Naive thymus-derived CD8-positive, alpha-beta T cell (primary cell): ENCODE measurements at regions of chr12 and their contacts with region 1.

Region 1: DNA sequence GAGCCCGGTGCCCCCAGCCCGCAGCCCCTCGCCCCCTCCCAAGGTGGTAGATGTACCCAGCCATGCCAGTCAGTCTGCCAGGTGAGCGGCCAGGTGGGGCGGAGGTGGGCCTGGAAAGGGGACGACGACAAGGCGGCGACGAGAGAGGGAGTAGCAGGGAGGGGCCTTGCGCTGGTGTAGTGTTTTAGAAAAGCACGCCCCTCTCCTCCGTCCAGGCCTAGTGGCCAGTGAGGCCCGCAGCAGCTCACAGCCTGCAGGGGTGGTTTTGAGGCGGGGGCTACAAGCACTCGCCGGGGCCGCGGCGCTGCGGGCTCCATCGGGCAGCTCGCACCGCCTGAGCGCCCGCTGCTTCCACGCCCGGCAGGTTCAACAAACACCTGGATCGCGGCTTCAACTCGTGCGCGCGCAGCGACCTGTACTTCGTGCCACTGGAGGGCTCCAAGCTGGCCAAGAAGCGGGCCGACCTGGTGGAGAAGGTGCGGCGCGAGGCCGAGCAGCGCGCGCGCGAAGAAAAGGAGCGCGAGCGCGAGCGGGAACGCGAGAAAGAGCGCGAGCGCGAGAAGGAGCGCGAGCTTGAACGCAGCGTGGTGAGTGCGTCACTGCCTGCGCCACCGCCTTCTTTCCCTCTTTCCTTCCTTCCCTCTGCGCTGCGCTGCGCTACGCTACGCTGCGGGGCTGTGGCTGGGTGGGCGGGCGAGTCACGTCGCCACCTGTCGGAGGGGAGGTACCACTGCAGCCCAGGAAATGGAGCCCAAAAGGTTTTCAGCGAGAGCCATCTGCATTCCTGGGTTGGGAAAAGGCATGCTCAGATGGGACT is 5.9 kb upstream of the RNU7-1 start:
- DNase-seq: peak; percentile 87 to 96 (median 92)
- ATAC-seq: peak; percentile 85 to 93
- H3K4me3 Mint-ChIP-seq: peak overlapping the region; percentile 72 to 91 (median 86)
- H3K27ac Mint-ChIP-seq: peak overlapping the region; percentile 89 to 98 (median 98)
- H3K4me1 Mint-ChIP-seq: peaks cover 29 to 53% (median 48%) of the 10 kb centered on the region in 4 donors
- H3K27me3 Mint-ChIP-seq: no peaks in the 10 kb centered on the region

Region 2: DNA sequence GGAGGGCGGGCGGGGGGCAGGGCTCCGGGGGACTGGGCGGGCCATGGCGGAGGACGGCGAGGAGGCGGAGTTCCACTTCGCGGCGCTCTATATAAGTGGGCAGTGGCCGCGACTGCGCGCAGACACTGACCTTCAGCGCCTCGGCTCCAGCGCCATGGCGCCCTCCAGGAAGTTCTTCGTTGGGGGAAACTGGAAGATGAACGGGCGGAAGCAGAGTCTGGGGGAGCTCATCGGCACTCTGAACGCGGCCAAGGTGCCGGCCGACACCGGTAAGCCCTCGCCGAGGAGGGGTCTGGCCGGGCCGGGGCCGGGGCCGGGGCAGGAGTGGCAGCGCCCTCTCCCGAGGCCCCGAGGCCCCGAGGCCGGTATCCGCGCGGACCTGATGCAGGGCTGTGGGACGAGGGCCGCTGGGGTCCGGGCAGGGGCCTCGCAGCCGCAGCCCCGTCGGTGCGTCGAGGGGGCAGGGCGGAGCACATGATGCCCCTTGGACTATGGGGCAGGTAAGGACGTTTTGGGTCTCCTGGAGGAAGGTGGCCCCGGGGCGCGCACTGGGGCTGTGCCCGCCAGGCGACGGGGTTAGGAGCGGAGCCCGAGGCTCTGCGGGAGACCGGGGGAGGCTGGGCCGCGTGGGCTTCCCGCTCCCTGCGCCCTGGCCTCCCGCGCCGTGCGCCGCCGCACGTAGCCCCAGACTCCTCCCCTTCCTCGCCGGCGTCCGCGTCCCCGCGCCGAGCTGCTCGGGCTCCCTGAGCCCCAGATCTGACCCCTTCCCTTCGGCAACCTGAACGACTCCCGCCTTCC is 70.1 kb before region 1 on chr12 and contains the start of gene TPI1:
- POLR2A ChIA-PET with region 1: interaction called, 48 read pairs
- DNase-seq: peak in 9 of 10 donors; percentile 38 to 87 (median 60)
- ATAC-seq: peak; percentile 70 to 72
- H3K4me3 Mint-ChIP-seq: peak within 1 kb of the TSS; percentile 84 to 95 (median 88)
- H3K27ac Mint-ChIP-seq: peak within 1 kb of the TSS; percentile 84 to 96 (median 89)
- H3K4me1 Mint-ChIP-seq: peaks cover 33 to 62% (median 52%) of the 10 kb centered on the region in 4 donors
- H3K27me3 Mint-ChIP-seq: no peaks in the 10 kb centered on the region
- polyA plus RNA-seq, gene TPI1: 372 to 497 (median 479) TPM

Region 3: DNA sequence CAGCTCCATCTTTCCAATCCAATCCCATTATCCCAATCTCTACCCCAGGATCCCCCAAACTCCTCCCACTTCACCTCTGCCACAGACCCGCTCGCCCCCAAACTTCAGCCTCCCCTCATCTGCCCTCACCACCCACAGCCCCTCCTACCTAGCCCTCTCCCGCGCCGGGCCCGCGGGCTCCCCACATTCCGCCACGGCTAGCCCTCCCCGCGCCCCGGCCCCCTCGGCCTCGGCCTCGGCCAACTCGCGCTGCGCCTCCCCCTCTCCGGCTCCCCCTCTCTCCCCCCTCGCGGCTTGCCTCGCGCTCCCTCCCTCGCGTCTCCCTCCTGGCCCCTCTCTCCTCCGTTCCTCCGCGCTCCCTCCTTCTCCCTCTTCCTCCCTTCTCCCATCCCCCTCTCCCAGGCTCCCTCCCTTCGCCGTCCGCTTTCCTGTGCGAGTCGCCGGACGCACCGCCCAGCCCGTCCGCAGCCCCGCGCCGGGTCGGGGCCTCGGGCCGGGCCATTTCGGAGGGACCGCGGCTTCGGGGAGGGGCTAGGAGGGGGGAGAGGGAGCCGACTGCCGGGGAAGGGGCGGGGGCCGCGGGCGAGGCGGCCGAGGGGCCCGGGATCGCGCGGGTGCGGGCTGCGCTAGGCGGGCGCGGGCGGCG is 10.2 kb before region 1 on chr12 and contains the start of gene ATN1:
- POLR2A ChIA-PET with region 1: interaction called, 82 read pairs
- DNase-seq: peak in 5 of 10 donors; percentile 37 to 47 (median 43)
- ATAC-seq: peak; percentile 18 to 41
- H3K4me3 Mint-ChIP-seq: peak within 1 kb of the TSS; percentile 82 to 94 (median 90)
- H3K27ac Mint-ChIP-seq: peak within 1 kb of the TSS; percentile 91 to 96 (median 92)
- H3K4me1 Mint-ChIP-seq: peaks cover 35 to 60% (median 51%) of the 10 kb centered on the region in 4 donors
- H3K27me3 Mint-ChIP-seq: no peaks in the 10 kb centered on the region
- polyA plus RNA-seq, gene ATN1: 0.35 to 1.4 (median 1.1) TPM

Region 4: DNA sequence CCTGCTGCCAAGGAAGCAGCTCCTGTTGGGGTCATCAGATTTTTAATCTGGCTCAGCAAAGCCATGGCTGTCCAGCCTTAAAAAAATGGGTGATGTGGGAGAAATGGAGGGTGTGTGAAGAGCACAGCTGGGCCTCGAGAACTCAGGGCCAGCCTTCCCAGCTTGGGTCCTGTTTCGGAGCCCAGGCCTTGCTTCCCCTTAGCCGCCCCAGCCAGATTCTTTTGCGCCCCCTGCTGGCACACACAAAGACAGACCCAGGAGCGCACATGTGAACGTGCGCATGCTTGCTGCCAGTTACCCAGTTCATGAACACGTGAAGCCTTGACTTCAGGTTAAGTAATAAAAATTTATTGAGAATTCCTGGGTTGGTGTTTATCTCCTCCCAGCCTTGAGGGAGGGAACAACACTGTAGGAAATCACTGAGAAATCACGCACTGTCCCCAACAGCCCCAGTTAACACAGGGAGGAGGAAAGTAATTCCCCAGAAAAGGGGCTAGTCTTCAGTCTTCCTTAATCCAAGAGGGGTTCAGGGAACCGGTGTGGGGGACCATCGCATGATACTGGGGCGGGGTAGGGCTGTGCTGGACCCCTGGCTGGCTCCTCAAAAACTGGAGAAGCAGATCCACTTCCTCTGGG is 27.5 kb after region 1 on chr12:
- POLR2A ChIA-PET with region 1: interaction called, 1,315 read pairs
- DNase-seq: peak; percentile 77 to 93 (median 86)
- ATAC-seq: peak; percentile 46 to 61
- H3K4me3 Mint-ChIP-seq: peak overlapping the region in 4 of 10 donors; percentile 15 to 48 (median 30)
- H3K27ac Mint-ChIP-seq: peak overlapping the region; percentile 79 to 95 (median 90)
- H3K4me1 Mint-ChIP-seq: peaks cover 31 to 64% (median 62%) of the 10 kb centered on the region in 4 donors
- H3K27me3 Mint-ChIP-seq: no peaks in the 10 kb centered on the region